ENCODE measurements at regions of chr12 and their contacts with region 1.

Region 1: GRCh38 chr12:49358483-49359141 is 8.7 kb upstream of the SPATS2 start:
- DNase-seq: peak; percentile 84
- ATAC-seq: peak; percentile 89
- H3K4me3 ChIP-seq: peak overlapping the region in 1 of 2 experiments; percentile 12; a peak in 1 of 4 replicates
- H3K27ac ChIP-seq: peak overlapping the region; percentile 38; the same call in 1 of the 2 replicates
- H3K4me1 ChIP-seq: peaks cover 30 to 35% of the 10 kb centered on the region in 2 experiments
- H3K27me3 ChIP-seq: no peaks in the 10 kb centered on the region
- CTCF ChIP-seq: peak; percentile 83 to 97 (median 92)
- POLR2A ChIP-seq: no peak
- RAD21 ChIP-seq: peak; percentile 98

Region 2: GRCh38 chr12:49288412-49288853 is 70.2 kb before region 1 on chr12:
- CTCF ChIA-PET with region 1: interaction called, 47 read pairs
- POLR2A ChIA-PET with region 1: no interaction called
- RAD21 ChIA-PET with region 1: interaction called, 7 read pairs
- intact Hi-C with region 1: loop called (anchors 1 kb)
- DNase-seq: peak; percentile 46
- ATAC-seq: peak; percentile 74
- H3K4me3 ChIP-seq: no peak overlapping the region
- H3K27ac ChIP-seq: no peak overlapping the region
- H3K4me1 ChIP-seq: peaks cover 0 to 10% of the 10 kb centered on the region in 2 experiments; a peak in 2 of 4 replicates
- H3K27me3 ChIP-seq: no peaks in the 10 kb centered on the region
- CTCF ChIP-seq: peak; percentile 76 to 97 (median 89)
- POLR2A ChIP-seq: no peak
- RAD21 ChIP-seq: peak; percentile 92

Region 3: DNA sequence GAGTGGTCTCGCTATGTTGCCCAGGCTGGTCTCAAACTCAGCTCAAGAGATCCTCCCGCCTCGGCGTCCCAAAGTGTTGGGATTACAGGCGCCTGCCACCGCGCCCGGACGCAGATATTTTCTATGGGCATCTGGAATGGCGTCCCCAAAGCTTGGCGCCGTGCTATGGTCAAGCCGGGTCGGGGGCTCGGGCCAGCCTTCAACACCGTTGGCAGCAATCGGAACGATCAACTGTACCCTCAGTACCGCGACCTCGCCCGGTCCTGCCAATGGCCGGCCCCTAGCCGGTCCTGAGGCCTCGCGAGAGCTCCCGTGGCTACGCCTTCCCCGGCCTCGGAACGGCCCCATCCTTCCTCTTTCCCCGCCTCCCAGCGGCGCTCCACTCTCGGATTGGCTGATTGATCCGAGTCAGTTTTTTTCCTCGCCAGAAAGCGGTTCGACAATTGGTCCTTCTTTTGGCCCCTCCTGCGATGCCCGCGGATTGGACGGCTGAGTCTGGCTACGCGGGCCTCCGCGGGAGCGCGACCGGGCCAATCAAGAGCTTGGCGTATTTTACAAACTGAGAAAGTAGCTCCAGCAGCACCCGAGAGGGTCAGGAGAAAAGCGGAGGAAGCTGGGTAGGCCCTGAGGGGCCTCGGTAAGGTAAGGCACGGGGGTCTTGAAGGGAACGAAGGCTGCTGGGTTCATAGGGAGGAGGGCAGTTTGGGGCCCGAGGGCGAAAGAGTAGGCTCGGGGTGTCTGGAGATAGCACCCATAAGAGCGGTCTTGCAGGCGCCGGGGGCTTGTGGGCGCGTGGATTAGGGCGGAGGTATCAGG is 35.7 kb before region 1 on chr12 and contains the start of gene TROAP:
- CTCF ChIA-PET with region 1: interaction called, 13 read pairs
- POLR2A ChIA-PET with region 1: no interaction called
- RAD21 ChIA-PET with region 1: no interaction called
- intact Hi-C with region 1: no loop called
- DNase-seq: peak; percentile 97
- ATAC-seq: peak; percentile 96
- H3K4me3 ChIP-seq: peak within 1 kb of the TSS; percentile 72 to 99
- H3K27ac ChIP-seq: peak within 1 kb of the TSS; percentile 70
- H3K4me1 ChIP-seq: peaks cover 8 to 14% of the 10 kb centered on the region in 2 experiments
- H3K27me3 ChIP-seq: no peaks in the 10 kb centered on the region
- CTCF ChIP-seq: no peak
- POLR2A ChIP-seq: peak; percentile 51
- RAD21 ChIP-seq: no peak
- total RNA-seq, gene TROAP: 99.1 TPM

Region 4: GRCh38 chr12:49342066-49342913 is 16.3 kb before region 1 on chr12:
- CTCF ChIA-PET with region 1: interaction called, 74 read pairs
- POLR2A ChIA-PET with region 1: interaction called, 16 read pairs
- RAD21 ChIA-PET with region 1: interaction called, 3 read pairs
- intact Hi-C with region 1: no loop called
- DNase-seq: peak; percentile 79
- ATAC-seq: peak; percentile 84
- H3K4me3 ChIP-seq: peak overlapping the region; percentile 35 to 47
- H3K27ac ChIP-seq: peak overlapping the region; percentile 28; the same call in 1 of the 2 replicates
- H3K4me1 ChIP-seq: peaks cover 32 to 68% of the 10 kb centered on the region in 2 experiments
- H3K27me3 ChIP-seq: no peaks in the 10 kb centered on the region
- CTCF ChIP-seq: peak in 2 of 3 experiments; percentile 79 to 86; a peak in 4 of 6 replicates
- POLR2A ChIP-seq: no peak
- RAD21 ChIP-seq: no peak

Region 5: GRCh38 chr12:49503674-49504180 is 145.1 kb after region 1 on chr12:
- CTCF ChIA-PET with region 1: interaction called, 15 read pairs
- POLR2A ChIA-PET with region 1: interaction called, 3 read pairs
- RAD21 ChIA-PET with region 1: interaction called in 1 of 2 experiments, 4 read pairs
- intact Hi-C with region 1: no loop called
- DNase-seq: peak; percentile 98
- ATAC-seq: peak; percentile 66
- H3K4me3 ChIP-seq: peak overlapping the region in 1 of 2 experiments; percentile 46; a peak in 2 of 4 replicates
- H3K27ac ChIP-seq: peak overlapping the region; percentile 95
- H3K4me1 ChIP-seq: peaks cover 73 to 79% of the 10 kb centered on the region in 2 experiments
- H3K27me3 ChIP-seq: no peaks in the 10 kb centered on the region
- CTCF ChIP-seq: no peak
- POLR2A ChIP-seq: no peak
- RAD21 ChIP-seq: peak; percentile 21; the same call in 1 of the 2 replicates

Region 6: GRCh38 chr12:49529414-49529813 is 170.8 kb after region 1 on chr12:
- CTCF ChIA-PET with region 1: interaction called, 10 read pairs
- POLR2A ChIA-PET with region 1: no interaction called
- RAD21 ChIA-PET with region 1: no interaction called
- intact Hi-C with region 1: no loop called
- DNase-seq: no peak
- ATAC-seq: no peak
- H3K4me3 ChIP-seq: no peak overlapping the region
- H3K27ac ChIP-seq: no peak overlapping the region
- H3K4me1 ChIP-seq: peaks cover 0 to 5% of the 10 kb centered on the region in 2 experiments; a peak in 2 of 4 replicates
- H3K27me3 ChIP-seq: no peaks in the 10 kb centered on the region
- CTCF ChIP-seq: no peak
- POLR2A ChIP-seq: no peak
- RAD21 ChIP-seq: no peak

Region 7: GRCh38 chr12:49567611-49568441 is 209.2 kb after region 1 on chr12 and contains the start of gene MCRS1:
- CTCF ChIA-PET with region 1: interaction called, 3 read pairs
- POLR2A ChIA-PET with region 1: no interaction called
- RAD21 ChIA-PET with region 1: interaction called in 1 of 2 experiments, 7 read pairs
- intact Hi-C with region 1: loop called (anchors 5 kb)
- DNase-seq: peak; percentile 86
- ATAC-seq: peak; percentile 80
- H3K4me3 ChIP-seq: peak within 1 kb of the TSS; percentile 98 to 100
- H3K27ac ChIP-seq: peak within 1 kb of the TSS; percentile 67
- H3K4me1 ChIP-seq: peaks cover 8 to 15% of the 10 kb centered on the region in 2 experiments; a peak in 3 of 4 replicates
- H3K27me3 ChIP-seq: no peaks in the 10 kb centered on the region
- CTCF ChIP-seq: no peak
- POLR2A ChIP-seq: peak; percentile 81
- RAD21 ChIP-seq: no peak
- total RNA-seq, gene MCRS1: 91.9 TPM